IMR-90 (cell line): ENCODE measurements at regions of chr5 and their contacts with region 1.

Region 1: GRCh38 chr5:145294331-145294730 is 540.8 kb downstream of the PRELID2 start:
- DNase-seq: peak; percentile 20
- ATAC-seq: no peak; the same call in 1 of the 2 replicates
- H3K4me3 ChIP-seq: no peak overlapping the region
- H3K27ac ChIP-seq: no peak overlapping the region
- H3K4me1 ChIP-seq: no peaks in the 10 kb centered on the region
- H3K27me3 ChIP-seq: no peaks in the 10 kb centered on the region
- CTCF ChIP-seq: no peak
- POLR2A ChIP-seq: no peak
- RAD21 ChIP-seq: no peak

Region 2: GRCh38 chr5:144886668-144887067 is 407.7 kb before region 1 on chr5:
- CTCF ChIA-PET with region 1: no interaction called
- POLR2A ChIA-PET with region 1: no interaction called
- dilution Hi-C with region 1: no loop called
- in situ Hi-C with region 1: no loop called
- intact Hi-C with region 1: no loop called
- DNase-seq: no peak
- ATAC-seq: no peak
- H3K4me3 ChIP-seq: no peak overlapping the region
- H3K27ac ChIP-seq: no peak overlapping the region
- H3K4me1 ChIP-seq: no peaks in the 10 kb centered on the region
- H3K27me3 ChIP-seq: no peaks in the 10 kb centered on the region
- CTCF ChIP-seq: no peak
- POLR2A ChIP-seq: no peak
- RAD21 ChIP-seq: no peak

Region 3: GRCh38 chr5:145283101-145283810 is 11.1 kb before region 1 on chr5:
- CTCF ChIA-PET with region 1: no interaction called
- POLR2A ChIA-PET with region 1: interaction called, 12 read pairs
- dilution Hi-C with region 1: no loop called
- in situ Hi-C with region 1: no loop called
- intact Hi-C with region 1: no loop called
- DNase-seq: no peak
- ATAC-seq: no peak
- H3K4me3 ChIP-seq: no peak overlapping the region
- H3K27ac ChIP-seq: no peak overlapping the region
- H3K4me1 ChIP-seq: 0 out of 2 replicates have a peak, but pooled peaks cover 1% of the 10 kb centered on the region
- H3K27me3 ChIP-seq: no peaks in the 10 kb centered on the region
- CTCF ChIP-seq: no peak
- POLR2A ChIP-seq: no peak
- RAD21 ChIP-seq: no peak

Region 4: DNA sequence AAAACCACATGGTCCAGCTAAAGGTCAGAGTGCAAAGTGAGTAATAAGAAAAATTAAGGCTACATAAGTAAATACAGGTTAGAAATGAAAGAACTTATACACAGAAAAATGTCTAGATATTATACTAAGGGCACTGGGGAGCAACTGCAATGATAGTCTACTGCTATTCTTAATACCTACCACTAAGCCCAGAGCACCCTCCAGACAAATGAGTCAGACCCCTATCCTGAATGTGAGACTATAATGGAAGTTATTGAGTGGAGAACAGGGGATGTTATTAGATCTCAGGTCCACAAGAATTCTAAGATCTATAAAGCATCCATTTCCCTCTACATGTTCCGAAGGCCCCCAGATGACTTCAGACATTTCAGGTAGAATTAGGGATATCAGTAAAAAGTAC is 102.6 kb after region 1 on chr5:
- CTCF ChIA-PET with region 1: no interaction called
- POLR2A ChIA-PET with region 1: no interaction called
- dilution Hi-C with region 1: no loop called
- in situ Hi-C with region 1: no loop called
- intact Hi-C with region 1: no loop called
- DNase-seq: peak; percentile 8
- ATAC-seq: peak; percentile 27; the same call in 1 of the 2 replicates
- H3K4me3 ChIP-seq: no peak overlapping the region
- H3K27ac ChIP-seq: no peak overlapping the region
- H3K4me1 ChIP-seq: no peaks in the 10 kb centered on the region
- H3K27me3 ChIP-seq: no peaks in the 10 kb centered on the region
- CTCF ChIP-seq: no peak; the same call in 1 of the 2 replicates
- POLR2A ChIP-seq: no peak
- RAD21 ChIP-seq: no peak

Region 5: GRCh38 chr5:145587710-145588109 is 293.4 kb after region 1 on chr5:
- CTCF ChIA-PET with region 1: no interaction called
- POLR2A ChIA-PET with region 1: no interaction called
- dilution Hi-C with region 1: no loop called
- in situ Hi-C with region 1: no loop called
- intact Hi-C with region 1: no loop called
- DNase-seq: peak; percentile 93
- ATAC-seq: peak; percentile 92
- H3K4me3 ChIP-seq: no peak overlapping the region
- H3K27ac ChIP-seq: peak overlapping the region; percentile 21; the same call in 1 of the 2 replicates
- H3K4me1 ChIP-seq: peaks cover 6% of the 10 kb centered on the region
- H3K27me3 ChIP-seq: no peaks in the 10 kb centered on the region
- CTCF ChIP-seq: no peak
- POLR2A ChIP-seq: no peak
- RAD21 ChIP-seq: no peak

Region 6: DNA sequence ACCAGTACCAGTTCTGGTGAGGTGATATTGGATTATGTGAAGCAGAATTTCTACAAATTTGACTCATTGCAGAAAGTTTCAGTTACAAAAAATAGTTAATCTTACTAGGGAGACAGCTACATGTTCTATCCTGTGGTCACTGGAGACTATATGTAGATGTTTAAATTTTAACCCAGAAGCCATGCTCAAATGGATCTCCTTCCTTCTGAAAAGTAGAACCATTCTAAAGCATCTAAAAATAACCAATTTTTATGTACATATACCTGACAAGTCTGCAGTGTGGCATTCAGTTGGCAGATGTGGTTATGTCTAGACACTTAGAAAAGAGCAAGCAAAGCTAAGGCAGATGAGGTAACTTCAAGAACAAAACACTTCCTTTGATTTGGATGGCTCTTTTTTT is 978.8 kb after region 1 on chr5:
- CTCF ChIA-PET with region 1: no interaction called
- POLR2A ChIA-PET with region 1: no interaction called
- dilution Hi-C with region 1: no loop called
- in situ Hi-C with region 1: no loop called
- intact Hi-C with region 1: no loop called
- DNase-seq: no peak
- ATAC-seq: no peak
- H3K4me3 ChIP-seq: no peak overlapping the region
- H3K27ac ChIP-seq: no peak overlapping the region
- H3K4me1 ChIP-seq: no peaks in the 10 kb centered on the region
- H3K27me3 ChIP-seq: no peaks in the 10 kb centered on the region
- CTCF ChIP-seq: no peak
- POLR2A ChIP-seq: no peak
- RAD21 ChIP-seq: no peak